MCF 10A (cell line): ENCODE measurements at regions of chr5 and their contacts with region 1.

Region 1: DNA sequence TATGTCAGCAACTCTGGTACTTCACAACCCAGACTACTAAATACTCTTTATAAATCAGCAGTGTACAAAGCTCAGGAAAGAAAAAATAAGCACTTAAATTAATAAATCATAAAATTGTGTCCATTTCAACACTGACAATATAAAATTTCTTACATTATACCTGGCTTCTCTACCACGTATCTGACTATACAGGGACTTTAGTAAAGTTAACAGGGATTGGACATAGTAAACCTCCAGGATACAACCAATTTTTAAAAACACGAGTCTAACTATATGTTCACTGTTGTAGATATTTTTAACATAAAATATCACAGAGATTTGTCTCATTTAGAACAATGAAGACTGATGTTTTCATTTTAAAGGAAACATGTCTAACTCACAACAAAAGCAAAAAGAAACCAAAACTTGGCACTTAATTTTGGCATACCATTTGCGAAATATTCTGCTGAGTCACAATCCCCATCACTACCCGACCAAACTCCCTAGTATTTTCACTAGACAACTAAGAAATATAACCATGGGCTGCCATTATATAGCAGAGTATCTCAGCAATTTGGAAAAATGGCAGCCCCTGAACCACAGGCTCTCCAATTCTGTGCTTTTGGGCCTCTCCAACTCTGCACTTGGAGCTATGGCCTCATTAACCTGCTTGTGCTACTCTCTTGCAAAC is 14.4 kb downstream of the FAM169A start:
- DNase-seq: peak; percentile 77
- H3K4me3 Mint-ChIP-seq: peak overlapping the region; percentile 74
- H3K27ac Mint-ChIP-seq: peak overlapping the region; percentile 95
- H3K4me1 Mint-ChIP-seq: peaks cover 10% of the 10 kb centered on the region
- H3K27me3 Mint-ChIP-seq: no peaks in the 10 kb centered on the region
- CTCF ChIP-seq: no peak

Region 2: DNA sequence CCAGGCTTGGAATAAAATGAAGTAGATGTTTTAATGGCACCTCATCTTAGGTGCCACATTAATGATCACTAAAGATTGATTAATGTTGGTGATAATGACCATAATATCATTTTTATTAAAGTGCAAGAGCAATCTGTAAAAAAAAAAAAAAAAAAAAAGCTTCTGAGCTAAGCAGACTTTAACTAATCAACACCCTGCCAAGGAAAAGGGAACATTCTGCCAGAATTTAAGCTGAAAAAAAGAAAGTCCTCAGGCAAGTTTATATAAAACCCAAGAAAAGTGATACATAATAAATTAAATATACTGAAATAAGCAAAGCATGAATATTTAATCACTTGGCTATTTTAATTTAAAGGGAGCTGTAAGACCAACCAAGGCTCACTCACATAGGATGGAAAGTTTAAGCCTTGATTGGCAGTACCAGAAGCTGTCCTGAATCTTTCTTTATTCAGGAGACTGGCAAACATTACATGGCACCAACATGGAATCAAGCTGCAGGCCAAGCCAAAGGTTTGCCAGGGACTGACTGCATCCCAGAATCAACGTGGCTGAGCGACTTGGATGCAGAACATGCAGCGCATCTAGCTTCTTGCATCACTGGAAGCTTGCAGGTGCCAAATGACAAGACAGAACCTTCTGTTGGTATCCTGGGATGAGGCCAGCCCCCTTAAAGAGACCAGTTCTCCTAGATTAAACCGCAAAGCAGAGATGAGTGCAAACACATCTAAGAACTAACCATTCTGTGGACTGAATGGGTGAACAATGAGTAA is 624.9 kb before region 1 on chr5:
- CTCF ChIA-PET with region 1: no interaction called
- POLR2A ChIA-PET with region 1: no interaction called
- intact Hi-C with region 1: no loop called
- DNase-seq: no peak
- H3K4me3 Mint-ChIP-seq: no peak overlapping the region
- H3K27ac Mint-ChIP-seq: no peak overlapping the region
- H3K4me1 Mint-ChIP-seq: peaks cover 6% of the 10 kb centered on the region
- H3K27me3 Mint-ChIP-seq: no peaks in the 10 kb centered on the region
- CTCF ChIP-seq: no peak

Region 3: GRCh38 chr5:74810915-74811314 is 40.9 kb before region 1 on chr5:
- CTCF ChIA-PET with region 1: interaction called, 3 read pairs
- POLR2A ChIA-PET with region 1: interaction called, 10 read pairs
- intact Hi-C with region 1: loop called (anchors 5 kb)
- DNase-seq: peak; percentile 89
- H3K4me3 Mint-ChIP-seq: no peak overlapping the region
- H3K27ac Mint-ChIP-seq: peak overlapping the region; percentile 27
- H3K4me1 Mint-ChIP-seq: no peaks in the 10 kb centered on the region
- H3K27me3 Mint-ChIP-seq: no peaks in the 10 kb centered on the region
- CTCF ChIP-seq: no peak

Region 4: GRCh38 chr5:74865804-74866595 is 14.2 kb after region 1 on chr5 and contains the start of gene FAM169A:
- CTCF ChIA-PET with region 1: interaction called, 6 read pairs
- POLR2A ChIA-PET with region 1: interaction called, 64 read pairs
- intact Hi-C with region 1: no loop called
- DNase-seq: peak; percentile 63
- H3K4me3 Mint-ChIP-seq: peak within 1 kb of the TSS; percentile 84
- H3K27ac Mint-ChIP-seq: peak within 1 kb of the TSS; percentile 91
- H3K4me1 Mint-ChIP-seq: peaks cover 23% of the 10 kb centered on the region
- H3K27me3 Mint-ChIP-seq: no peaks in the 10 kb centered on the region
- CTCF ChIP-seq: no peak
- total RNA-seq, gene FAM169A: 13.5 and 14.3 TPM in 2 replicates

Region 5: GRCh38 chr5:75847561-75848021 is 995.8 kb after region 1 on chr5:
- CTCF ChIA-PET with region 1: no interaction called
- POLR2A ChIA-PET with region 1: no interaction called
- intact Hi-C with region 1: no loop called
- DNase-seq: no peak
- H3K4me3 Mint-ChIP-seq: no peak overlapping the region
- H3K27ac Mint-ChIP-seq: no peak overlapping the region
- H3K4me1 Mint-ChIP-seq: no peaks in the 10 kb centered on the region
- H3K27me3 Mint-ChIP-seq: peaks cover 78% of the 10 kb centered on the region
- CTCF ChIP-seq: no peak